ENCODE measurements at regions of chr13 and their contacts with region 1.

Region 1: GRCh38 chr13:107373551-107373950 is 805.6 kb upstream of the ARGLU1 start:
- DNase-seq: peak; percentile 0 to 76
- H3K4me3 ChIP-seq: no peak overlapping the region
- H3K27ac ChIP-seq: no peak overlapping the region
- H3K4me1 ChIP-seq: peaks cover 7% of the 10 kb centered on the region
- H3K27me3 ChIP-seq: no peaks in the 10 kb centered on the region
- CTCF ChIP-seq: peak; percentile 72

Region 2: DNA sequence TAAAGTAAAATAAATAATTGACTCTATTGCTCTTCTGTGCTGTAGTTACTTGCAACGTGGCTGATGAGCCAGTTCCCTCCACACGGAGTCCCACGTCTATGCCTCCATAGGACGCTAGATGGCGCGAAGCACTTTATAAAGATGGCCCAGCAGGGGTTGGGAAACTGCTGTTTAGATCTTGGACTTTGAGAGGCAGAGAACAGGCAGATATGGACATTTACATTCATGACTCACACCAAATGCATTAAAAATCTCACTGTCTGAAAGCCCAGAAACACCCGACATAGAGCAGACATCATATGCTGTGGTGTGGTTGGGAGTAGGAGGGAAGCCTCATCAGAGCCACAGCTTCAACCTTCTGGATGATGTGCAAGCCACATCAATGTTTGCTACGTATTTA is 162.5 kb before region 1 on chr13:
- CTCF ChIA-PET with region 1: no interaction called
- POLR2A ChIA-PET with region 1: no interaction called
- intact Hi-C with region 1: loop called (anchors 1 kb)
- DNase-seq: peak; percentile 70 to 73
- H3K4me3 ChIP-seq: no peak overlapping the region
- H3K27ac ChIP-seq: no peak overlapping the region
- H3K4me1 ChIP-seq: no peaks in the 10 kb centered on the region
- H3K27me3 ChIP-seq: no peaks in the 10 kb centered on the region
- CTCF ChIP-seq: peak; percentile 95

Region 3: GRCh38 chr13:107642831-107643230 is 269.3 kb after region 1 on chr13:
- CTCF ChIA-PET with region 1: no interaction called
- POLR2A ChIA-PET with region 1: interaction called, 12 read pairs
- intact Hi-C with region 1: no loop called
- DNase-seq: no peak
- H3K4me3 ChIP-seq: no peak overlapping the region
- H3K27ac ChIP-seq: no peak overlapping the region
- H3K4me1 ChIP-seq: no peaks in the 10 kb centered on the region
- H3K27me3 ChIP-seq: no peaks in the 10 kb centered on the region
- CTCF ChIP-seq: no peak

Region 4: GRCh38 chr13:107650081-107650701 is 276.6 kb after region 1 on chr13:
- CTCF ChIA-PET with region 1: interaction called, 4 read pairs
- POLR2A ChIA-PET with region 1: no interaction called
- intact Hi-C with region 1: loop called (anchors 5 kb)
- DNase-seq: peak in 1 of 2 experiments; percentile 45
- H3K4me3 ChIP-seq: no peak overlapping the region
- H3K27ac ChIP-seq: no peak overlapping the region
- H3K4me1 ChIP-seq: no peaks in the 10 kb centered on the region
- H3K27me3 ChIP-seq: no peaks in the 10 kb centered on the region
- CTCF ChIP-seq: peak; percentile 84

Region 5: DNA sequence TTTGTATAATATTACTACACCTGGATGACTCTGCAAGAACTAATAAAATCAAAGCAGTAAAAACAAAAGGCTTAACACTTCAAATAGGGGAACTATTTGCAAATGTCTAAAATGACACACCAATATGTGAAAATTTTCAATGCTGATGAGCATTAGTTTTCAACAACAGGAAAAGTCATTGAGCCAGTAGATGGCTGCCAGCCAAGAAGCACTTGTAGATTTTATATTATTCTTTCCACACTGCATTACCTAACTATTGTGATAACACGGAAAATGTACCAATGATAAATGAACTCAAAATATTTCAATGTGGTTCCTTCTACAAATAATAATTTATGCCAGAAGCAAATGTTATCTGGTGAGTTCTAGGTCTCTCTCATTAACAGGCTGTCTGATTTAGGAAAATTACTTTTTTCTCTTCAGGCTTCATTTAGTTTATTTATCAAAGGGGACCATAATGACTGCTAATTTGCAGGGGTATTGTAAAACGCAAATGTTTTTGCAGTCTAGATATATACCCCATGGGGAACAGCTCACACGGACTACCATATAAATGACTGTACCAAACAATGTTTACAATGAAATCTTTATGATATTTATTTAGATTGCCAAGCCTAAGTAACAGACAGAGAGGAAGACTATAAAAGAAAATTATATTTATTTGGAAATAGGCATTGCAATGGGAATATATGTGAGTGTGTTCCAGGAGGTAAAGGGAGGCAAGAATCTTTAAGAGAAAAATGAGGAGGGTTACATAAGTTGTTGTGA is 433.9 kb after region 1 on chr13:
- CTCF ChIA-PET with region 1: no interaction called
- POLR2A ChIA-PET with region 1: no interaction called
- intact Hi-C with region 1: no loop called
- DNase-seq: no peak
- H3K4me3 ChIP-seq: no peak overlapping the region
- H3K27ac ChIP-seq: no peak overlapping the region
- H3K4me1 ChIP-seq: no peaks in the 10 kb centered on the region
- H3K27me3 ChIP-seq: no peaks in the 10 kb centered on the region
- CTCF ChIP-seq: no peak

Region 6: GRCh38 chr13:108155185-108156106 is 781.9 kb after region 1 on chr13:
- CTCF ChIA-PET with region 1: no interaction called
- POLR2A ChIA-PET with region 1: no interaction called
- intact Hi-C with region 1: loop called (anchors 10 kb)
- DNase-seq: peak; percentile 42 to 48
- H3K4me3 ChIP-seq: no peak overlapping the region
- H3K27ac ChIP-seq: no peak overlapping the region
- H3K4me1 ChIP-seq: no peaks in the 10 kb centered on the region
- H3K27me3 ChIP-seq: no peaks in the 10 kb centered on the region
- CTCF ChIP-seq: peak; percentile 97

Measured in PC-9 (cell line).